Mammary epithelial cell (primary cell): ENCODE measurements at regions of chr4 and their contacts with region 1.

Region 1: DNA sequence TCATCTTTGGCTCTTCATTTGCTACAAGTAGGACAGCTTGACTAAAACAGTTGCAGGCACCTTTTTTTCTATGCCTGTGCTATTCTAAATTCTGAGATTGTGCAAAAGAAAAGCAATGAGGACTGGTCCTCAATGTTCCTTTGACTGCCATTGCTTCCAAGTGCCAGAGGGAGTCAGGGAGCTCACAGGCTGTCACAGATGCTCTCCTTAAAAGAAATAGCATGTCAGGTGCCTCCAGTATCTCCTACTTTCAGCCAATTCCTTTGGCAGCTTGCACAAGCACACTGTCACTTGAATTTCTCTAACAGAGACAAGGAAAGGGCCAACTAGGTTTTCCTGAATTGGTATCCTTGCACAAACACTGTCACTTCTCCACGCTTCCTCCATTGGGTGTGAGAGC is 228.2 kb downstream of the ADGRA3 start:
- DNase-seq: no peak
- H3K4me3 ChIP-seq: no peak overlapping the region
- H3K27ac ChIP-seq: no peak overlapping the region
- H3K4me1 ChIP-seq: no peaks in the 10 kb centered on the region
- H3K27me3 ChIP-seq: no peaks in the 10 kb centered on the region
- CTCF ChIP-seq: no peak

Region 2: DNA sequence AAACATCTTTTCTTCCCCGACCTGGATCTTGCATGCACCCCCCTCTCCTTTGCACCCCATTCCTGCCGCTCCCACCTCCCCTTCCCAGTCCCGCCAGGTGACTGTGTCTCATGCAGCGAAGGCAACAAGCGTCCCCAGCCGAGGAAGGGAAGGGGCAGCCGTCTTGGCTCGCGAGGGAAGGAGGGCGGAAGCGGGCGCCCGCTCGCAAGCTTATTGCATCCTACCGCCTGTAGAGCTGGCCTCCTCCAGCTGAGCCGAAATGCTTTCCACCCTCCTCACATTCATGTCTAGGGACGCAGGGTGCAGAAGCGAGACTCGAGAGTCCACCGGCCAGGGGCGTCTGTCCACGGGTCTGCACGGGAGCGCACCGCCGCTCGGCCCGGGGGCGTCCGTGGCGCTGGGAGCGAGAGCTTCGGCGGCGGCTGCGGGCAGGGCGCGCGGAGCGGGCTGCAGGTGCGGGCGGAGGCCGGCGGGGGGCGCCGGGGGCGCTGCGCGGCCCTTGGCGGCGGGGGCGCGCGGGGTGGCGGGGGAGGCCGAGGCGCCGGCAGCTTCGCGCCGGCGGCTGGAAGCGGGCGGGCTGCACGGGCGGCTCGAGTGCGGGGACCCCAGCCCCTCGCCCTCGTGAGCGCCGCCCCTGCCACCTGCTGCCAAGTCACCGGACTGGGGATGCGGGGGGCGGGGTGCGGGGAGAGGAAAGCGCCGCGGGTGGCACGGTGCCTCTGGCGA is 339.1 kb before region 1 on chr4 and contains the start of gene KCNIP4:
- CTCF ChIA-PET with region 1: interaction called, 10 read pairs
- dilution Hi-C with region 1: no loop called
- in situ Hi-C with region 1: no loop called
- intact Hi-C with region 1: no loop called
- DNase-seq: peak; percentile 34
- H3K4me3 ChIP-seq: peak within 1 kb of the TSS; percentile 44 to 59 (median 55)
- H3K27ac ChIP-seq: no peak within 1 kb of the TSS
- H3K4me1 ChIP-seq: peaks cover 6% of the 10 kb centered on the region
- H3K27me3 ChIP-seq: peaks cover 15% of the 10 kb centered on the region
- CTCF ChIP-seq: no peak
- total RNA-seq, gene KCNIP4: not detected

Region 3: GRCh38 chr4:22389240-22389870 is 101.7 kb after region 1 on chr4:
- CTCF ChIA-PET with region 1: no interaction called
- dilution Hi-C with region 1: no loop called
- in situ Hi-C with region 1: no loop called
- intact Hi-C with region 1: no loop called
- DNase-seq: peak; percentile 53
- H3K4me3 ChIP-seq: no peak overlapping the region
- H3K27ac ChIP-seq: no peak overlapping the region
- H3K4me1 ChIP-seq: peaks cover 20% of the 10 kb centered on the region
- H3K27me3 ChIP-seq: no peaks in the 10 kb centered on the region
- CTCF ChIP-seq: peak; percentile 84 to 93